IMR-90 (cell line): ENCODE measurements at regions of chr2 and their contacts with region 1.

Region 1: GRCh38 chr2:197086500-197086899 is 160.0 kb upstream of the PGAP1 start:
- DNase-seq: no peak
- ATAC-seq: no peak
- H3K4me3 ChIP-seq: no peak overlapping the region
- H3K27ac ChIP-seq: no peak overlapping the region
- H3K4me1 ChIP-seq: peaks cover 5% of the 10 kb centered on the region; the same call in 1 of the 2 replicates
- H3K27me3 ChIP-seq: no peaks in the 10 kb centered on the region
- CTCF ChIP-seq: no peak
- POLR2A ChIP-seq: no peak
- RAD21 ChIP-seq: no peak

Region 2: DNA sequence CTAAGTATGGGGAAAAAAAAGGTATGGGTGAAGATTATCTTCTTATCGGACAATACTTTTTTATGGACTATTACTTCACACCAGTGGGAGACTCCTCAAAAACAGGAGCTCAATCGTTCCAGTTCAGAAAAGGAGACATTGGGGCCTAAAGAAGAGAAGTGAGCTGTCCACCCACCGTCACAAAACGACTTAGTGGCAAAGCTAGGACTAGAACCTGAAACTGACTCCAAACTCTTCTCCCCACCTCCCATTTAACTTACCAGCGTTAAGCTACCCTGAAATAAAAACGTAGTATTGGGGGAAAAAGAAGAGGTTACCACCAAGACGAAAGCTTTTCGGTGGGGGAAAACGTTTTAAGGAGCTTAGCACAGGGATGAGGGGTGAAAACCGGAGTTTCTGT is 287.5 kb before region 1 on chr2:
- CTCF ChIA-PET with region 1: no interaction called
- POLR2A ChIA-PET with region 1: no interaction called
- dilution Hi-C with region 1: no loop called
- in situ Hi-C with region 1: no loop called
- intact Hi-C with region 1: no loop called
- DNase-seq: no peak
- ATAC-seq: peak; percentile 8; the same call in 1 of the 2 replicates
- H3K4me3 ChIP-seq: peak overlapping the region; percentile 95
- H3K27ac ChIP-seq: peak overlapping the region; percentile 77
- H3K4me1 ChIP-seq: no peaks in the 10 kb centered on the region
- H3K27me3 ChIP-seq: no peaks in the 10 kb centered on the region
- CTCF ChIP-seq: no peak
- POLR2A ChIP-seq: no peak
- RAD21 ChIP-seq: no peak

Region 3: GRCh38 chr2:197075759-197076337 is 10.7 kb before region 1 on chr2:
- CTCF ChIA-PET with region 1: interaction called, 11 read pairs
- POLR2A ChIA-PET with region 1: no interaction called
- dilution Hi-C with region 1: no loop called
- in situ Hi-C with region 1: no loop called
- intact Hi-C with region 1: no loop called
- DNase-seq: no peak
- ATAC-seq: no peak
- H3K4me3 ChIP-seq: no peak overlapping the region
- H3K27ac ChIP-seq: no peak overlapping the region
- H3K4me1 ChIP-seq: peaks cover 6% of the 10 kb centered on the region
- H3K27me3 ChIP-seq: no peaks in the 10 kb centered on the region
- CTCF ChIP-seq: peak; percentile 47
- POLR2A ChIP-seq: no peak
- RAD21 ChIP-seq: peak; percentile 53